CD4-positive, alpha-beta T cell (primary cell): ENCODE measurements at regions of chr4 and their contacts with region 1.

Region 1: DNA sequence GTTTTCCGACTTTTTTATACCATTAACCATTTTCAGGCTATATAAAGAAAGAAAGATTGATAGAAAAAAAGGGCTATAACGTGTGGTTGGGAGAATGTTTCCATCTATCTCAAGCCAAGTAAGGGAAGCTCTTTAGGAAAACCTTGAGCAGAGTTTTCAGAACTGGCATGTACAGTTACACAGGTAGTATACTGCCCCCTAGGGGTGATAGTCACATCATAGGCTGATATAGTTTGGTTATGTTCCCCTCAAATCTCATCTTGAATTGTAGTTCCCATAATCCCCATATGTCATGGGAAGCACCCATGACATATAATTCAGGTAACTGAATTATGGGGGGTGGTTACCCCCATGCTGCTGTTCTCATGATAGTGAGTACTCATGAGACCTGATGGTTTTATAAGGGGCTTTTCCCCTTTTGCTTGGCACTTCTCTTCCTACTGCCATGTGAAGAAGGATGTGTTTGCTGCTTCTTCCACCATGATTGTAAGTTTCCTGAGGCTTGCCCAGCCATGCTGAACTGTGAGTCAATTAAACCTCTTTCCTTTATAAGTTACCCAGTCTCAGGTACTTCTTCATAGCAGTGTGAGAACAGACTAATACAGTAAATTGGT is 186.8 kb downstream of the TMA16 start:
- DNase-seq: peak in 7 of 14 experiments; percentile 2 to 82 (median 47)
- ATAC-seq: peak; percentile 74
- H3K4me3 ChIP-seq: no peak overlapping the region
- H3K4me3 Mint-ChIP-seq: no peak overlapping the region
- H3K27ac ChIP-seq: no peak overlapping the region
- H3K27ac Mint-ChIP-seq: no peak overlapping the region
- H3K4me1 ChIP-seq: no peaks in the 10 kb centered on the region
- H3K4me1 Mint-ChIP-seq: peaks cover 7% of the 10 kb centered on the region
- H3K27me3 ChIP-seq: no peaks in the 10 kb centered on the region
- H3K27me3 Mint-ChIP-seq: no peaks in the 10 kb centered on the region
- CTCF ChIP-seq: peak; percentile 77

Region 2: DNA sequence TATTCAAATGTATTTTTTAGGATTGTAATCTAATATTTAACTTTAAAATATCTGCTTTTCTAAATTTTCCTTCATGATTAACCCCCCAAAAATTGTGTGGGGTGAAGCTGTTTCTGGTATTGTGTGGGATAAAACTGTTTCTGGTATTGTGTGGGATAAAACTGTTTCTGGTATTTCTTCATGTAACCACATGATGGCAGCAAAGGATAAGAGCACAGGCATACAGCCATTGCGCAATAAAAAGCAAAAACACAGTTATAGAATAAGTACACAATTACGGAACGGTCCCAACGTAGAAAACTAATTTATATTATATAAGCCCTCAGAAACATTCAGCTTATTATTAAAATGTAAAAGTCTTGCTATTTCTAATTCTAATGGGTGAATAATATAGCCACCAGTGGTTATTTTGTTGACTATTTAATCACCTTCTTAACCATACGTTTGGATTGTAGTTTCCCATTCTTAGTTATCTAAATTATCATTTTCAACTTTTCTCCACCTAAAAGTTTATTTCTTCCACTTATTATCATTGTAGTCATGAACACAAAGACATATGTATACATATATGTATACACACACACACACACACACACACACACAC is 1183.6 kb before region 1 on chr4:
- CTCF ChIA-PET with region 1: no interaction called
- POLR2A ChIA-PET with region 1: no interaction called
- intact Hi-C with region 1: loop called in 1 of 2 experiments (anchors 10 kb)
- DNase-seq: peak in 3 of 14 experiments; percentile 38 to 54 (median 52)
- ATAC-seq: peak; percentile 52
- H3K4me3 ChIP-seq: no peak overlapping the region
- H3K4me3 Mint-ChIP-seq: no peak overlapping the region
- H3K27ac ChIP-seq: no peak overlapping the region
- H3K27ac Mint-ChIP-seq: no peak overlapping the region
- H3K4me1 ChIP-seq: no peaks in the 10 kb centered on the region
- H3K4me1 Mint-ChIP-seq: no peaks in the 10 kb centered on the region
- H3K27me3 ChIP-seq: no peaks in the 10 kb centered on the region
- H3K27me3 Mint-ChIP-seq: peaks cover 10% of the 10 kb centered on the region
- CTCF ChIP-seq: peak; percentile 72

Region 3: GRCh38 chr4:163484906-163485305 is 196.4 kb before region 1 on chr4:
- CTCF ChIA-PET with region 1: no interaction called
- POLR2A ChIA-PET with region 1: no interaction called
- intact Hi-C with region 1: loop called in 1 of 2 experiments (anchors 5 kb)
- DNase-seq: peak; percentile 14 to 77 (median 39)
- ATAC-seq: peak; percentile 60
- H3K4me3 ChIP-seq: no peak overlapping the region
- H3K4me3 Mint-ChIP-seq: no peak overlapping the region
- H3K27ac ChIP-seq: no peak overlapping the region
- H3K27ac Mint-ChIP-seq: no peak overlapping the region
- H3K4me1 ChIP-seq: no peaks in the 10 kb centered on the region
- H3K4me1 Mint-ChIP-seq: no peaks in the 10 kb centered on the region
- H3K27me3 ChIP-seq: no peaks in the 10 kb centered on the region
- H3K27me3 Mint-ChIP-seq: peaks cover 11% of the 10 kb centered on the region
- CTCF ChIP-seq: peak; percentile 71

Region 4: GRCh38 chr4:163755013-163755412 is 73.7 kb after region 1 on chr4:
- CTCF ChIA-PET with region 1: no interaction called
- POLR2A ChIA-PET with region 1: no interaction called
- intact Hi-C with region 1: loop called in 1 of 2 experiments (anchors 10 kb)
- DNase-seq: peak in 3 of 14 experiments; percentile 51 to 57 (median 52)
- ATAC-seq: peak; percentile 61
- H3K4me3 ChIP-seq: no peak overlapping the region
- H3K4me3 Mint-ChIP-seq: no peak overlapping the region
- H3K27ac ChIP-seq: no peak overlapping the region
- H3K27ac Mint-ChIP-seq: no peak overlapping the region
- H3K4me1 ChIP-seq: no peaks in the 10 kb centered on the region
- H3K4me1 Mint-ChIP-seq: peaks cover 9% of the 10 kb centered on the region
- H3K27me3 ChIP-seq: no peaks in the 10 kb centered on the region
- H3K27me3 Mint-ChIP-seq: peaks cover 7% of the 10 kb centered on the region
- CTCF ChIP-seq: peak; percentile 62

Region 5: GRCh38 chr4:164012396-164013027 is 331.2 kb after region 1 on chr4:
- CTCF ChIA-PET with region 1: no interaction called
- POLR2A ChIA-PET with region 1: no interaction called
- intact Hi-C with region 1: loop called in 1 of 2 experiments (anchors 10 kb)
- DNase-seq: peak in 12 of 14 experiments; percentile 2 to 64 (median 14)
- ATAC-seq: peak; percentile 64
- H3K4me3 ChIP-seq: no peak overlapping the region
- H3K4me3 Mint-ChIP-seq: no peak overlapping the region
- H3K27ac ChIP-seq: no peak overlapping the region
- H3K27ac Mint-ChIP-seq: no peak overlapping the region
- H3K4me1 ChIP-seq: no peaks in the 10 kb centered on the region
- H3K4me1 Mint-ChIP-seq: peaks cover 21% of the 10 kb centered on the region
- H3K27me3 ChIP-seq: no peaks in the 10 kb centered on the region
- H3K27me3 Mint-ChIP-seq: no peaks in the 10 kb centered on the region
- CTCF ChIP-seq: peak; percentile 62

Region 6: DNA sequence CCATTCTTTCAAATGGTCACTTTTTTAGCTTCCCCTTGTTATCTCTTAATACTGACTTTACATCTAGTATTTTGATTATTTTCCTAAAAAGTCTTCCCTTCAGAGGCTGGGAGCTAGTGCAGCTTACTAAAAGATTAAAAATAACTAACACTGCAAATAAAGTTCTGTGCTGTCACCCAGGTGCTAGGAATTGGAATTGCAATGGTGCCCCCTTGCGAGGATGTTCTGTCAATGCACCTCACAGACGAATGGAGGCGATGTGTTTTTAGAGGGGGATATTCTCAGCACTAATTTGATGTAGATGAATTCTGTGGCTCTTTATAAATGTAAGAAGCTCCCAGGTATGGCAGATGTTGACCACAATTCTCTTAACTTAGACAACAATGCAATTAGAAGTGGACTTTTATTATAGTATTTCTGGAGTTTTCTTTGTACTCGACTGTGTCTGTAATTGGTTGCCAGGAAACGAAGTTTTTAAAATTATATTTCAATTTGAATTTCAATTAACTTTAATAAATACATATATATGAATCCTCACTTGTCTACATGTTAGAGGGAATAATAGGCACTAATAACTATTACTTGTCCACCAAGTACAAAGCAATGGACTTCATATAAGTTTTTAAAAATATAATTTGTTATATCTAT is 1050.6 kb after region 1 on chr4:
- CTCF ChIA-PET with region 1: no interaction called
- POLR2A ChIA-PET with region 1: no interaction called
- intact Hi-C with region 1: loop called in 1 of 2 experiments (anchors 5 kb)
- DNase-seq: peak; percentile 7 to 67 (median 33)
- ATAC-seq: peak; percentile 71
- H3K4me3 ChIP-seq: no peak overlapping the region
- H3K4me3 Mint-ChIP-seq: no peak overlapping the region
- H3K27ac ChIP-seq: no peak overlapping the region
- H3K27ac Mint-ChIP-seq: no peak overlapping the region
- H3K4me1 ChIP-seq: no peaks in the 10 kb centered on the region
- H3K4me1 Mint-ChIP-seq: no peaks in the 10 kb centered on the region
- H3K27me3 ChIP-seq: peaks cover 0 to 10% of the 10 kb centered on the region in 2 experiments
- H3K27me3 Mint-ChIP-seq: peaks cover 28% of the 10 kb centered on the region
- CTCF ChIP-seq: peak; percentile 90